Naive thymus-derived CD8-positive, alpha-beta T cell (primary cell): ENCODE measurements at regions of chr4 and their contacts with region 1.

Region 1: DNA sequence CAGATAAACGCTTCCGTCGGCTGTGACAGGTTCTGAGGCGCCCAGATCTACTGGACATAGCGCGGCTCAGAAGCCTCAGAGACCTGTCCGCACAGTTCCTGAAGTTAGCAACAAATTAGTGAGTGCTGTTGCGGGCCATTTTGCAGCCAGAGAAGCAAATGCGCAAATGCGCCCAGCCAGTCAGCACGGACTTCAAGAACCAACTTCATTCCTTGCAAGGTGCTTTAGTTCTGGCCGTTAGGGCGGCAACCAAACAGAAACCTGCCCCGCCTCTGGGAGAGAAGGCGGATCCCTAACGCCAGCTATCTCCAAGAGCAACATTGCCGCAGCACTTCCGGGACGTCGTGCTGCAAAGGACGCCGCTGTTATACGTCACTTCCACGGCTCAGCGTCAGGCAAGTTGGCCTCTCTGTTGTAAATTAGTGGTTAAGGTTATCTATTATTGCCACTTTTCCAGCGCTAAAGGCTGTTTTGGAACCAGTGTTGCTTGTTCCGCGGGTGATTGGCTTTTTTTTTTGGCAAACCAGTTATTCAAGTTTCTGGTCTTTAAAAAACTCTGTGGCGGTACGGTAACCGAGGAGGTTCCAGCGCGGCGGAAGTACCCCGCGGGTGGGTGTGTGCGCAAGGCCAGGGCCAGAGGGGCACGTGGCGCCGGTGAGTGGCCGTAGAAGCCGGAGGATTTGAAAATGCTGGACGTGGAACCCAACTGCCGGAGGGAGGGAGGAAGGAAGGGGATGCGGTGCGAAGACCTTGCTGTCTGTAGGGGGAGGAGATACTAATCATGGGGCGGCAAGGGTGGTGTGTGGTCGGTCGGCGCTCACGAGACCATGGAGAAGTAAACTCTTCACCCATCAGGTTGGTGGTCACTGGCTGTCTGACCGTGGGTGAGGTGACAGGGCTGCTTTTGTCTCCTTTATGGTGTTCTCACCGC is at the start of gene GAR1:
- DNase-seq: peak; percentile 69 to 90 (median 84)
- ATAC-seq: peak; percentile 93
- H3K4me3 Mint-ChIP-seq: peak within 1 kb of the TSS; percentile 95 to 99 (median 98)
- H3K27ac Mint-ChIP-seq: peak within 1 kb of the TSS; percentile 96 to 100 (median 99)
- H3K4me1 Mint-ChIP-seq: peaks cover 25 to 44% (median 39%) of the 10 kb centered on the region in 4 donors
- H3K27me3 Mint-ChIP-seq: no peaks in the 10 kb centered on the region
- polyA plus RNA-seq, gene GAR1: 12.5 to 23.7 (median 16.2) TPM

Region 2: DNA sequence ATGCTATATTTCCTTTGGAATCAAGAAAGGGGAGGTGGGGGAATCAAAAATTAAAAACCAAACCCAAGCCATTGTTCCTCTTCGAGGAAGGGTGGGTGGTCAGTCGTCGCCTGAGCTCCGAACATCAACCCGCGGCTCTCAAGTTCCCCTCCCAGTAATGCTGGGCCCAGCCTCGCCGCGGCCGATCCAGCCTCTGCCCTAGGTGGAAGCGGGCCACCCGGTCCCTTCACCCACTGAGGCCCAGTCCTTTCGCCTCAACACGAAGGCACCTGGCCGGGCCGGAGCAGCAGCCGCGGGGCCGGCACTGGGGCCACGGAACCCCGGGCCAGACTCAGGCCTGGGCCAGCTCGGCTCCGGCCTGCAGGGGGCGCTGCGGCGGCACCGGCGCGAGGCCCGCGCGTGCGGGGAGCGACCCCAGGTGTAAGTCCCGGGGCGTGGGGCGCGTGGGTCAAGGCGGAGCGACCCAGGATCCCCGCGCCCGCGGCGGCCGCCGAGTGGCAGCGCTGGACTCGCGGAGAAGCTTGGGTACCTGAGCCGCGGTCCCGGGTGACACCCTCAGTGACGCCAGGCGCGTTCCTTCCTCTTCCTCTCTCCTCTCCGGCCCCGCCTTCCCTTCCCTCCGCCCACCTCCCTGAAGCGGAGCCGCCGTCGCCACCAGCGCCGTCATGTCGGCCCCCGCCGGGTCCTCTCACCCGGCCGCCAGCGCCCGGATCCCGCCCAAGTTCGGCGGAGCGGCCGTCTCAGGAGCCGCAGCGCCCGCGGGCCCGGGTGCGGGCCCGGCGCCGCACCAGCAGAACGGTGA is 382.0 kb before region 1 on chr4 and contains the start of gene SEC24B:
- POLR2A ChIA-PET with region 1: interaction called, 12 read pairs
- DNase-seq: peak; percentile 85 to 94 (median 90)
- ATAC-seq: peak; percentile 89
- H3K4me3 Mint-ChIP-seq: peak within 1 kb of the TSS; percentile 77 to 95 (median 90)
- H3K27ac Mint-ChIP-seq: peak within 1 kb of the TSS; percentile 86 to 97 (median 94)
- H3K4me1 Mint-ChIP-seq: peaks cover 14 to 53% (median 51%) of the 10 kb centered on the region in 4 donors
- H3K27me3 Mint-ChIP-seq: no peaks in the 10 kb centered on the region
- polyA plus RNA-seq, gene SEC24B: 8.3 to 17.2 (median 10.5) TPM

Region 3: DNA sequence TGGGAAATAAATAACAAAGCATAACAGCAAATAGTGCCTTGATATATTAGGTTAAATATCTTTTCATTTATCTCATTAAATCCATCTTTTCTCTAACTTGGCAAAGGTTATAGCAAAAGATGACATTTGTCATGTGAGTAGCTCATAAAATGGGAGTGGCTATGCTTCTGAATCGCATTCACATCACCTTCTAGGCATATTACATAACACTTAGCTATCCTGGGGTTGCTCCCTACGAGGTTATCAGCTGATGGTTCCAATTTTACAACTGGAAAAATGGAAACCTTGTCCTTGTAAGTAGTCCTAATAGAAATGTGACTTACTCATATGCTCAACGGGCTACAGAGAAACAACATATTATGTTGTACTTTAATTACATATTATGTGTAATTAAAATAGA is 101.9 kb before region 1 on chr4:
- POLR2A ChIA-PET with region 1: no interaction called
- DNase-seq: no peak
- ATAC-seq: no peak
- H3K4me3 Mint-ChIP-seq: no peak overlapping the region
- H3K27ac Mint-ChIP-seq: no peak overlapping the region
- H3K4me1 Mint-ChIP-seq: no peaks in the 10 kb centered on the region
- H3K27me3 Mint-ChIP-seq: no peaks in the 10 kb centered on the region

Region 4: DNA sequence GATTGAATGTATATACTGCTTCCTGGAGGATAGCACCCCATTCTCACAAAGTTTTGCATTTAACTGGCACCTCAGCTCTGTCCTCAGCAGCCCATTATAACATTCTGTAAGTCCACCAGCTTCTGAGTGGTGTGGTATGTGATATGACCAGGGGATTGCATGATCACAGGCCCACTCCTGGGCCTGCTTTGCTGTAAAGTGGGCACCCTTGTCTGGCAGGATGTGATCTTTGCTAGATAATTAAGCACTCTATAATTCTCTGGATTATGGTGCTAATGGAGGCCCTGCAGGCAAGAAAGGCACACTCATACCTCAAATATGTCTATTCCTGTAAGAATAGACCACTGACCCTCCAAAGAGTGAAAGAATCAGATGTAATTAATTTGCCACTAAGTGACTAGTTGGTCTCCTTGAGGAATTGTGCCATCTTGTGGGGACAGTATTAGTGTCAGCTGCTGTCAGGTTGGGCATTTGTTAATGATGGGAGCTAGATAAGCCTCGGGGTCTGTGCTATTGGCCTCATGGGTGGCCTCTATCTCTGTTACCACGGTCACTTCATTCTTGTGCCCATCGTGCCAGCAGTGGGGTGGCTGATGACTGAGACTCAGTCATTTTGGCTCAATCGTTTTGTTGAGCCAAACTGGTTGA is 11.4 kb before region 1 on chr4:
- POLR2A ChIA-PET with region 1: no interaction called
- DNase-seq: peak in 4 of 10 donors; percentile 10 to 22 (median 14)
- ATAC-seq: no peak
- H3K4me3 Mint-ChIP-seq: no peak overlapping the region
- H3K27ac Mint-ChIP-seq: no peak overlapping the region
- H3K4me1 Mint-ChIP-seq: no peaks in the 10 kb centered on the region
- H3K27me3 Mint-ChIP-seq: peaks cover 0 to 21% (median 8%) of the 10 kb centered on the region in 5 donors

Region 5: GRCh38 chr4:109836986-109837385 is 21.6 kb after region 1 on chr4:
- POLR2A ChIA-PET with region 1: no interaction called
- DNase-seq: no peak
- ATAC-seq: no peak
- H3K4me3 Mint-ChIP-seq: no peak overlapping the region
- H3K27ac Mint-ChIP-seq: no peak overlapping the region
- H3K4me1 Mint-ChIP-seq: no peaks in the 10 kb centered on the region
- H3K27me3 Mint-ChIP-seq: no peaks in the 10 kb centered on the region